ENCODE measurements at regions of chr12 and their contacts with region 1.

Region 1: DNA sequence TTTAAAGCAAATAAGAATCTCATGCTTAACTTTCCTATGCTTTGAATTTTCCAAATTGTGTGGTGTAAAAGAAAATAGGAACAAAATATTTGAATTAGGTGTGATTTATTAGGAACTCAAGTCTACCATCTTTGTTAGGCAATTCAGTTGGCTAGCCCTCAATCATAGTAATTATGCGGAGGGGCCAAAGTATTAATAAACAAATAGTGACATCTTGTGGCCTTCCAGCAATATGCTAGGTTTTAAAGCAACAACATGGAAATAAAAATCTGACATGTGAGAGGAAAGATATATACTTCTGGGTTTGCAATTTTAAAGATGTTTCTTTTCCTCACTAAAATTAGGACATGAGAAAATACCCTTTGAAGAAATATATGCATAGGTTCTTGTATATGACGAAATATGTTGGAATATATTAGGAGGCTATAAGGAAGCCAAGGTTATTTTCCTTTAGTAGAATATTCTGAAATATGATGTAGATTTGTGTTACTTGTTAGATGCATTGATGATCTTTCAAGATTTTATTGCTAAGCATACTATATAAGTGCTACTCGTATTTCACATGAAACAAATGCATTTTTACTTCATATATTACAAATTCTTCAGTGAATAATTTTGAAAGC is 200.4 kb downstream of the PTPRO start:
- DNase-seq: no peak
- H3K4me3 ChIP-seq: no peak overlapping the region
- CTCF ChIP-seq: no peak
- POLR2A ChIP-seq: no peak

Region 2: GRCh38 chr12:14026537-14026936 is 1496.1 kb before region 1 on chr12:
- intact Hi-C with region 1: no loop called
- DNase-seq: no peak
- H3K4me3 ChIP-seq: no peak overlapping the region
- CTCF ChIP-seq: no peak
- POLR2A ChIP-seq: no peak

Region 3: GRCh38 chr12:15074351-15074750 is 448.3 kb before region 1 on chr12:
- intact Hi-C with region 1: no loop called
- DNase-seq: no peak
- H3K4me3 ChIP-seq: no peak overlapping the region
- CTCF ChIP-seq: no peak
- POLR2A ChIP-seq: no peak

Region 4: DNA sequence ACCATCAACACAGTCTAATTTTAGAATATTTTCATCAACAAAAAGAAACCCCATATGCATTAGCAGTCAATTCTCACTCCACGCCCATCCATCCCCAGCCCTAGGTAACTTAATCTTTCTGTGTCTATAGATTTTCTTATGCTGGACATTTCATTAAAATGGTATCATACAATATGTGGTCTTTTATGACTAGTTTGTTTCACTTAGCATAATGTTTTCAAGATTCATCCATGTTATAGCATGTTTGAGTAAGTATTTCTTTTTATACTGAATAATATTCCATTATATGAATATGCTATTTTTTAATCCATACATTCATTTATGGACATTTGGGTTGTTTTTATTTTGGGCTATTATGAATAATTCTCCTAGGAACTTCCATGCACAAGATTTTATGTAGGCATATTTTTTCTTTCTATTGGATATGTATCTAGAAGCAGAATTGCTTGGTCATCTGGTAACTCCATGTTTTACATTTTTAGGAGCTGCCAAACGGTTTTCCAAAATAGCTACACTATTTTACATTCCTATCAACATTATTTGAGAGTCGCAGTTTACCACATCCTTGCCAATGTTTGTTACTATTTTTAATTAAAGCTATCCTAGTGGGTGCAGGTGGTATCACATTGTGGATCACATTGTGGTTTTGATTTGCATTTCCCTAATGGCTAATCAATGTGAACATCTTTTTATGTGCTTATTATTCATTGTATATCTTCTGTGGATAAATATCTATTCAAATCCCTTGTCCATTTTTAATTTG is 350.4 kb before region 1 on chr12:
- intact Hi-C with region 1: no loop called
- DNase-seq: no peak
- H3K4me3 ChIP-seq: no peak overlapping the region
- CTCF ChIP-seq: no peak
- POLR2A ChIP-seq: no peak

Region 5: DNA sequence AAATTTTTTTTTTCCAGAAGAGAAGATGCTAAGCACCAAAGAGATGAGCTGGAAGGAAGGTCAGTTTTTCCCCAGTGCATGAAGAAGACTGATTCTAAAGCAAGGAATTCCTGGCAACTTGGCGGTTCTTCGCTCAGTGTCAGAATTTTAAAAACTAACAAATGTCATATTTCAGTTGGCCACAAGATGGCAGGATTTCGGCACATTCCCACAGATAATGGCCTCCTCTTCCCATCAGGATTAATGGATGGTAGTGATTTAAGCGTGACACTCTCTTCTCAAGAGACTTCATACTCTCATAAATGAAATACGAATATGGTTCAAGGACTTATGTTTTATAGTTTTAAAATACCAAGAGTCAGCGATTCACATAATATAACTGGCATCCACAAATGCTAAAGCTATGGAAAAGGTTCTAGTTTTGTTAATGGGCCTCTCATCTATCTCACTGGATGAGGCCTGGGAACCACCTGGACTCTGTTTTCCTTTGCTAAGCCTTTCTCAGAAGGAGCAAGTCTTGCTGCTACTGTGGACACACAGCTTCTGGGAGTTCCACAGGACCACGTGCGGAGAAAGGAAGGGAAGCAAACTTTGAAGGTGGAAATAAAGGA is 246.5 kb before region 1 on chr12:
- intact Hi-C with region 1: loop called (anchors 5 kb)
- DNase-seq: peak in 1 of 2 donors; percentile 41
- H3K4me3 ChIP-seq: no peak overlapping the region
- CTCF ChIP-seq: no peak
- POLR2A ChIP-seq: no peak